Right lobe of liver (tissue), 6 donors: ENCODE measurements at regions of chr21 and their contacts with region 1.

Region 1: DNA sequence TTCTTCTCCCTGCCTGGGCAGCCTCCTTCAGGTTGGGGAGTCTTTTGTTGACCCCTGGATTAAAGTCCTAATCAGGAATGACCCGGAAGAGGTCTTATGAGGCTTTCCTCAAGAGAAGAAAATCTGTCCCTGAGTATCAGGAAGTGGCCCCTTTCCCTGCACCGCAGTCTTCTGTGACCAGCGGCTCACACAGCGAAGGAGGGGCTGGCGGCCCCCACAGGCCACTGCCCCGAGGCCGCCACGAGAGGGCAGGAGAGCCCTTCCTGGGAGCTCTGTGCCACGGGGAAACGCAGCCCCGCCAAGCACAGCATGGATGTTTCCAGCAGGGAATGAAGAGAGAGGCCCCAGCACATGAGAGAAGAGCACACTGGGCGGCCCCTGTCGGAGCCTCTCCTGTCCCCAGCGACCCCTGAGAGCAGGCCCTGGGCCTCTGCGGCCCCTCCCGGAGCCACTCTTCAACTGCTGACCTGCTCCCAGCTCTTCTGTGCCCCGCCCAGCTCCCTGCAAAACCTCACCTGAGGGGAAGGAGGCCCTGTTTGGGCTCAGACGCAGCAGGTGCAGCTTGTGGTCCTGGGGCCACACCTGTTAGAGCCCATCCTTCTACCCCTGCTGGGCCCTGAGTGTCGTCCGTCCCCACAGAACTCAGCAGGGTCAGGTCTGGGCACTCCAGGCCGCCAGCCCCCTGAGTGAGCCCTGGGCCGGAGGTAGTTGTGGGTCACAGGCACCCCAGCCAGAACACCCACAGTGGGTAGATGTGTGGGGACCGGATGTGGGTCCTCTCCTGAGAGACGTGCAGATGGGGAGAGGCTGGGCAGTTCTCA is 4.9 kb upstream of the POFUT2 start:
- DNase-seq: peak; percentile 83 to 87 (median 83)
- ATAC-seq: peak; percentile 80 to 83 (median 82)
- H3K4me3 ChIP-seq: no peak overlapping the region
- H3K27ac ChIP-seq: peak overlapping the region; percentile 62 to 91 (median 80)
- H3K4me1 ChIP-seq: peaks cover 0 to 10% (median 5%) of the 10 kb centered on the region in 4 donors
- H3K27me3 ChIP-seq: no peaks in the 10 kb centered on the region
- CTCF ChIP-seq: peak; percentile 99
- POLR2A ChIP-seq: no peak

Region 2: DNA sequence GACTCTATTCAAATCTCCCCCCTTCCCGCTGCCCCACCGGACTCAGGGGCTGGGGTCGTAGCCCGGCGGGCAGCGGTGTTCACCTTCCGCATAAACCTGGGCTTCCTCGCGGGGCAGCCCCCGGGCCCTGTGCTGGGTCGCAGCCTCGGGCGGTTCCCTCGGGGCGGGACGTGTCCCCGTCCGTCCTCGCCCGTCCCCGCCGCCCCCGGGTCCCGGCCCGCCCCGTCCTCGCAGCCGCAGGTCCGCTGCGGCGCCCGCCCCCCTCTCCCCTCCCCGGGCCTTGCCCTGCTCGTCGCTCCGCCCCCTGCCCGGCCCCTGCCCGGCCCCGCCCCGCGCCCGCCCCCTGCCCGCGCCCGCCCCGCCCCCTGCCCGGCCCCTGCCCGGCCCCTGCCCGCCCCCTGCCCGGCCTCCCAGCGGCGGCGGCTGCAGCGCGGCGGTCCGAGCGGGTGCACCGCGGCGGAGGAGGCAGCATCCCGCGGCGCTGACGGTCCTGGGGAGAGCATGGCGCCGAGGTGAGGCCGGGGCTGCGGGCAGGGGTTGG is 112.2 kb after region 1 on chr21 and contains the start of gene COL18A1:
- intact Hi-C with region 1: no loop called
- DNase-seq: peak; percentile 72 to 77 (median 72)
- ATAC-seq: peak; percentile 39 to 50 (median 43)
- H3K4me3 ChIP-seq: peak within 1 kb of the TSS; percentile 53 to 60 (median 57)
- H3K27ac ChIP-seq: peak within 1 kb of the TSS in 2 of 3 donors; percentile 26 to 77
- H3K4me1 ChIP-seq: peaks cover 0 to 16% (median 5%) of the 10 kb centered on the region in 4 donors
- H3K27me3 ChIP-seq: no peaks in the 10 kb centered on the region
- CTCF ChIP-seq: no peak
- POLR2A ChIP-seq: no peak
- total RNA-seq, gene COL18A1: 261 to 487 (median 297) TPM

Region 3: GRCh38 chr21:45427331-45428271 is 135.0 kb after region 1 on chr21:
- intact Hi-C with region 1: loop called in 1 of 2 experiments (anchors 5 kb)
- DNase-seq: no peak
- ATAC-seq: peak in 3 of 4 donors; percentile 6 to 74 (median 42)
- H3K4me3 ChIP-seq: no peak overlapping the region
- H3K27ac ChIP-seq: no peak overlapping the region
- H3K4me1 ChIP-seq: no peaks in the 10 kb centered on the region
- H3K27me3 ChIP-seq: no peaks in the 10 kb centered on the region
- CTCF ChIP-seq: no peak
- POLR2A ChIP-seq: no peak

Region 4: GRCh38 chr21:45439161-45439872 is 146.7 kb after region 1 on chr21:
- intact Hi-C with region 1: loop called in 1 of 2 experiments (anchors 5 kb)
- DNase-seq: peak; percentile 84 to 88 (median 87)
- ATAC-seq: peak; percentile 79 to 90 (median 82)
- H3K4me3 ChIP-seq: peak overlapping the region; percentile 20 to 48 (median 32)
- H3K27ac ChIP-seq: peak overlapping the region; percentile 23 to 64 (median 58)
- H3K4me1 ChIP-seq: peaks cover 0 to 25% (median 5%) of the 10 kb centered on the region in 4 donors
- H3K27me3 ChIP-seq: no peaks in the 10 kb centered on the region
- CTCF ChIP-seq: peak; percentile 97 to 99 (median 98)
- POLR2A ChIP-seq: peak; percentile 39